MCF 10A (cell line): ENCODE measurements at regions of chr3 and their contacts with region 1.

Region 1: DNA sequence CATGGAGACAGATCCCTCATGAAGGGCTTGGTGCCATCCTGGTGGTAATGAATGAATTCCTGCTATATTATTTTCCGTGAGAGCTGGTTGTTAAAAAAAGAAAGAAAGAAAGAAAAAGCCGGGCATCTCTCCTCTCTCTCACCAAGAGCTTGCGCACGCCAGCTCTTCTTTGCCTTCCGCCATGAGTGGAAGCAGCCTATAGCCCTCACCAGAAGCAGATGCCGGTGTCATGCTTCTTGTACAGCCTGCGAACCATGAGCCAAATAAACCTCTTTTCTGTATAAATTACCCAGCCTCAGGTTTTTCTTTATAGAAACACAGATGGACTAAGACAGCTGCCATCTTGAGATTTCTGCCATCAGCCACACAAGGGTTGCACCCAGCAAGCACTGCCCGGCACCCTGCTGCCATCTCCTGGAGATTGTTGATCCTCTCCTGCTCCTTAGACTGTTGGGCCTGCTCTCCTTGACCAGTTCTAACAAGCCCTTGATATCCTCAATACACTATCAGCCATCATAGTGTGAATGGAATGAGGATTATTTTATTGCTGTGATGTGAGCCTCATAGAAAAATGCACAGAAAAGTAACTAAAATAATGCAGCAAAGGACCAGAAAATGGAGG is 3.5 kb upstream of the AHSG start:
- DNase-seq: peak; percentile 74
- H3K4me3 Mint-ChIP-seq: no peak overlapping the region
- H3K27ac Mint-ChIP-seq: peak overlapping the region; percentile 27
- H3K4me1 Mint-ChIP-seq: peaks cover 7% of the 10 kb centered on the region
- H3K27me3 Mint-ChIP-seq: no peaks in the 10 kb centered on the region
- CTCF ChIP-seq: peak; percentile 57

Region 2: GRCh38 chr3:186589121-186589520 is 20.2 kb before region 1 on chr3:
- CTCF ChIA-PET with region 1: interaction called, 100 read pairs
- POLR2A ChIA-PET with region 1: interaction called, 10 read pairs
- intact Hi-C with region 1: loop called (anchors 1 kb)
- DNase-seq: peak; percentile 73
- H3K4me3 Mint-ChIP-seq: peak overlapping the region; percentile 47
- H3K27ac Mint-ChIP-seq: peak overlapping the region; percentile 86
- H3K4me1 Mint-ChIP-seq: peaks cover 25% of the 10 kb centered on the region
- H3K27me3 Mint-ChIP-seq: no peaks in the 10 kb centered on the region
- CTCF ChIP-seq: peak; percentile 33

Region 3: DNA sequence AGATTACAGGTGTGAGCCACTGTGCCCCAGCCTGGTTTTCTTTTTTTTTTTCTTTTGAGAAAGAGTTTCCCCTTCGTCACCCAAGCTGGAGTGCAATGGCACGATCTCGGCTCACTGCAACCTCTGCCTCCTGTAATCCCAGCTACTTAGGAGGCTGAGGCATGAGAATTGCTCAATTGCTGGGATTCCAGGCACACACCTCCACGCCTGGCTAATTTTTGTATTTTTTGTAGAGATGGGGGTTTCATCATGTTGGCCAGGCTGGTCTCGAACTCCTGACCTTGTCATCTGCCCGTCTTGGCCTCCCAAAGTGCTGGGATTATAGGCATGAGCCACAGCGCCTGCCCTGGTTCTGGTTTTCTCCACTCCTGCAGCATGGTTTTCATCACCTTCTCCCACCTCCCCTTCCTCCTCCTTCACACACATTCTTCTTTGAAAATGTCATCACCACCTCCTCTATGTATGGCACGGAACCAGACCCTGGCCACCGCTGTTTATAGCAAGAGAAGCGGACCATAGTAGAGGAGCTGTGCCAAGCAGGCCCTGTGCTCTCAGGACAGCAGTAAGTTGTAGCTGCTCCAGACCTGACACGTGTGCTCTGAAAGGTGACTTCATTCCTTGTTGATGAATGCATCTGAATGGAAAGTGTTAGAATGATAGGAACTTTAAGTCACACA is 11.1 kb before region 1 on chr3:
- CTCF ChIA-PET with region 1: interaction called, 100 read pairs
- POLR2A ChIA-PET with region 1: interaction called, 6 read pairs
- intact Hi-C with region 1: no loop called
- DNase-seq: peak; percentile 57
- H3K4me3 Mint-ChIP-seq: no peak overlapping the region
- H3K27ac Mint-ChIP-seq: no peak overlapping the region
- H3K4me1 Mint-ChIP-seq: peaks cover 27% of the 10 kb centered on the region
- H3K27me3 Mint-ChIP-seq: no peaks in the 10 kb centered on the region
- CTCF ChIP-seq: no peak